Activated CD8-positive, alpha-beta memory T cell treated with anti-CD3 and anti-CD28 coated beads, Interleukin-2, amount 10 ng/mL, durations not matched to agents 7 days and 5 days (primary cell): ENCODE measurements at regions of chr10 and their contacts with region 1.

Region 1: GRCh38 chr10:111598436-111599059 is 521.7 kb downstream of the ADRA2A start:
- DNase-seq: peak; percentile 48
- ATAC-seq: peak; percentile 64
- H3K4me3 Mint-ChIP-seq: no peak overlapping the region
- H3K27ac Mint-ChIP-seq: no peak overlapping the region
- H3K4me1 Mint-ChIP-seq: no peaks in the 10 kb centered on the region
- H3K27me3 Mint-ChIP-seq: no peaks in the 10 kb centered on the region

Region 2: DNA sequence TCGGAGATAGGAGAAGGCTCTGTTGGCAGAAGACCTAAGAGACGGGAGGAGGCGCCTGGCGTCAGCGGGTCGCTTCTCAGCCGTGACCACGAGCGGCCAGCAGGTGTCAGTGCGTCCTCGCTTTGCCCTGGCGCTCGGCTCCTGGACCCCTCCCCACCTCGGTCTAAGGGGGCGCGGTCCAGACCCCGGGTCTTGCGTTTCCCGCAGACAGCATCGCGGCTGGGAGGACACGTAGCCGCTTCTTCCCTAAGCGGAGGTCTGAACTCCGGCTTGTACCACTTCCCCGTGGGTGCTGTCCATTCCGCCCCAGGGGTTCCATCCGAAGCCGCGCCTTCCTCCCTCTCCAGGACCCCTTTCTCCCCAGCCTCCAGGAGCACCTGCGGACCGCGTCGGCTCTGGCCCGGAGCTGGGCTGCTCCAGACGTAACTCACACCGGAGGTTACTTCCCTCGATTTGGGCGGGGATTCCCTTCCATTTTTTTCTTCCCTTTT is 522.3 kb before region 1 on chr10:
- CTCF ChIA-PET with region 1: interaction called, 15 read pairs
- DNase-seq: peak; percentile 64
- ATAC-seq: peak; percentile 73
- H3K4me3 Mint-ChIP-seq: peak overlapping the region; percentile 47
- H3K27ac Mint-ChIP-seq: no peak overlapping the region
- H3K4me1 Mint-ChIP-seq: peaks cover 13% of the 10 kb centered on the region
- H3K27me3 Mint-ChIP-seq: peaks cover 80% of the 10 kb centered on the region